Posterior vena cava (tissue), 2 donors: ENCODE measurements at regions of chr19 and their contacts with region 1.

Region 1: GRCh38 chr19:21921691-21922180 is 85.8 kb upstream of the ZNF43 start:
- DNase-seq: no peak

Region 2: GRCh38 chr19:21891081-21891480 is 30.7 kb before region 1 on chr19:
- intact Hi-C with region 1: loop called in 1 of 2 experiments (anchors 1 kb)
- DNase-seq: no peak

Region 3: DNA sequence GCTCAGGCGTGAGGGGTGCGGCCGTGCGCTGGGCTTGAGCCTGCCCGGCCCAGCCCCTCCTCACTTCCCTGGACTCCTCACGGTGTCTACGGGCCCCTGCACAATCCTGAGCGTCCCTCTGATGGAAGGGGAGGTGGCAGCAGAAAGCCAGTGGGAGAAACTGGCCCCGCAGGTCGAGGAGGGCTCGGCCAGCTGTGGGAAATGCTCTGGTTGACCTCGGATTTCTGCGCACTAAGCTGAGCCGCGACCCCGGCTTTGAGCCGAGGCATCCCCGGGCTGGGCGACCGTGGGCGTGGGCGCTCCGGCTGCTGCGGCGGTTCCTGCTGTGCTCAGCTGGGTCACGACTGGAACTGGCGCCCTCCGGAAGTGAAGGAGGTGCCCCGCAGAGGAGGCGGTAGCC is 18.9 kb after region 1 on chr19:
- intact Hi-C with region 1: no loop called
- DNase-seq: no peak